CD4-positive, alpha-beta memory T cell (primary cell): ENCODE measurements at regions of chr17 and their contacts with region 1.

Region 1: DNA sequence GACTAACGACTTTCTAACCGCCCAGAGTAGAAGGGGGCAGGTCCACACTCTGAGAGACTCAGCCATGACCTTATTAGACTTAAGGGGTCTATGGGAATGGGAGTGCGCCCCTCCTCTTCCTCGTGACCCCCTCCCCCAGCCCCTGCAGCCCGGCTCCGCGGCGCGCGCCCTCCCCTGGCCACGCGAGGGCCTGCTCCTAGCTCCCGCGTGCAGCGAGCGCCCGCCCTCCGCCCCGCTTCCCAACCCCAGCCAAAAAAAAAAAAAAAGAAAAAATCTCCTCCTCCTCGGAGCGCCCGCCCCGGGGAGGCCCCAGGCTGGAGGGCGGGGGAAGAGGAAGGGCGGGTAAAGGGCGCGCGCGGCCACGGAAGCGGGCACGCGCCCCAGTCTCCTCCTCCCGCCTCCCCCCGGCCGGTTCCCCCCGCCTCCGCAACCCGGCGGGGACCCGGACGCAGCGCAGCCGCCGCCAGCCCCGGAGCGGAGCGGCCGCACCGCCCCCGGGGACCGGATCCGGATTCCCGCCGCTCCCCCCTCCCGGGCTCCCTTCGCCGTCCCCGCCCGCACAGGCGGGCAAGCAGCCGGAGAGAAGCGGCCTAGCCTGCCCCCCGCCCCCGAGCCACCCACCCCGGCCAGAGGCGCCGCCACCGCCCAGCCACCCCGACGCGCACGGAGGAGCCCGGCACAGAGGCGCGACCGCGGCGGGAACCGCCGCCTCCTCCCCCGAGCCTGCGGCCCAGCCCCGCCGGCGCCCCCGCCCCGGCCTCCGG is 949 bp downstream of the UBTF start:
- DNase-seq: peak; percentile 85 to 92 (median 90)
- H3K4me3 ChIP-seq: peak overlapping the region; percentile 37 to 50
- H3K4me3 Mint-ChIP-seq: peak overlapping the region; percentile 68 to 93 (median 83)
- H3K27ac ChIP-seq: peak overlapping the region; percentile 71
- H3K27ac Mint-ChIP-seq: peak overlapping the region; percentile 15 to 95 (median 91)
- H3K4me1 ChIP-seq: peaks cover 60% of the 10 kb centered on the region
- H3K4me1 Mint-ChIP-seq: peaks cover 39 to 68% (median 51%) of the 10 kb centered on the region in 4 donors
- H3K27me3 ChIP-seq: no peaks in the 10 kb centered on the region
- H3K27me3 Mint-ChIP-seq: no peaks in the 10 kb centered on the region

Region 2: DNA sequence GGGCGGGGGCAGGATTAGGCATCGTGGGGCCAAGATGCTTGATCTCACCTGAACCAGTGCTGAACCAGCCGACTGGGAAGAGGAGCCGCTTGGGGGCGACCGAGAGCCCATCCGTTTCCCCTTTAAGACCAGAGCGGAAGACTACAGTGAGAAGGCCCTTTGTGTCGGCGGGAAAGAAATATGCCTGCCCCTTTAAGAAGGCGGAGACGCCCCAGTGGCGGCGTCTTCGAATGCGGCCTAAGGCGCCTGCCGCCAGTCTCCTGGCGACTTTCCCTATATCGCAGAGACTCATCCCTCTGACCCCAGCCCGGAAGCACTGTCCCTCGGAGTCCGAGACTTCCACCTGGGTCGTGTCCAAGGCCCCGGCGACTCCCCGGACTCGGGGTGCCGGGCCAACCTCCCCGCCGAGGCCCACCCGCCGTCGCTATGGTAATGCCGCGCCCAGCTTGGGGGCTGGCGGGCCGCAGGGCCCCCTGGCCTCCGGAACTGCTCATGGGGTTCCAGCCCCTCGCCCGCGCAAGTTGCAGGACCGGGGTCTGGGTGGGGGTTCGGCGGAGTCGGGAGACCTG is 76.7 kb before region 1 on chr17 and contains the start of gene HROB:
- CTCF ChIA-PET with region 1: no interaction called
- POLR2A ChIA-PET with region 1: no interaction called
- intact Hi-C with region 1: loop called (anchors 2 kb)
- DNase-seq: peak; percentile 96 to 99 (median 97)
- H3K4me3 ChIP-seq: peak within 1 kb of the TSS; percentile 66 to 69
- H3K4me3 Mint-ChIP-seq: peak within 1 kb of the TSS; percentile 77 to 94 (median 84)
- H3K27ac ChIP-seq: peak within 1 kb of the TSS; percentile 79
- H3K27ac Mint-ChIP-seq: peak within 1 kb of the TSS; percentile 88 to 95 (median 90)
- H3K4me1 ChIP-seq: peaks cover 14% of the 10 kb centered on the region
- H3K4me1 Mint-ChIP-seq: peaks cover 2 to 19% (median 10%) of the 10 kb centered on the region in 4 donors
- H3K27me3 ChIP-seq: no peaks in the 10 kb centered on the region
- H3K27me3 Mint-ChIP-seq: peaks cover 7% of the 10 kb centered on the region in 2 donors
- total RNA-seq, gene HROB: 0.36 to 0.64 TPM

Region 3: GRCh38 chr17:44199553-44200477 is 18.7 kb before region 1 on chr17 and contains the start of gene ATXN7L3:
- CTCF ChIA-PET with region 1: interaction called, 21 read pairs
- POLR2A ChIA-PET with region 1: interaction called, 325 read pairs
- intact Hi-C with region 1: loop called (anchors 1 kb)
- DNase-seq: peak; percentile 96 to 99 (median 98)
- H3K4me3 ChIP-seq: peak within 1 kb of the TSS; percentile 82 to 88
- H3K4me3 Mint-ChIP-seq: peak within 1 kb of the TSS; percentile 90 to 94 (median 92)
- H3K27ac ChIP-seq: peak within 1 kb of the TSS; percentile 82
- H3K27ac Mint-ChIP-seq: peak within 1 kb of the TSS; percentile 89 to 98 (median 96)
- H3K4me1 ChIP-seq: peaks cover 43% of the 10 kb centered on the region
- H3K4me1 Mint-ChIP-seq: peaks cover 30 to 58% (median 40%) of the 10 kb centered on the region in 4 donors
- H3K27me3 ChIP-seq: no peaks in the 10 kb centered on the region
- H3K27me3 Mint-ChIP-seq: no peaks in the 10 kb centered on the region
- total RNA-seq, gene ATXN7L3: 123 to 128 TPM

Region 4: DNA sequence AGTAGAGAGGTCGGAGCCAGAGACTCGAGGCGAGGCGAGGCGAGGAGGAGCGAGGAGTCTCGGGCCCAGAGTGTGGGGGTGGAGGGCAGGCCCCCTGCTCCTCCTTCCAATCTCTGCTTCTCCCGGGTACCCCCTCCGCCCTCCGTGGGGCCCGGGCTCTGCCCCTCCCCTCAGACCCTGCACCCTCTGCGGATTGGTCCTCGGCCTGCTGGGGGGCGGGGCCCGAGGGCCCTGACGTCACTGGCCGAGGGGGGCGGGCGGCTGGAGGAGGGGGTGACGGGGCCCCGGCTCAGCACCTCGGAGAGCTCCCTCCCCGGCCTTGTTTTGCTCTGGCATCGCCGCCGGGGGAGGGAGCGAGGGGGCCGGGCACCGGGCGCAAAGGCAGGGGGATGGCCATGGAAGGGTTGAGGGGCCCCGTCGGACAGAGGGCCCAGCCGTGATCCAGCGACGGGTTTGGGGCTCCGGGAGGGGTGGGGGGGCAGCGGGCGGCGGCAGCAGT is 89.8 kb after region 1 on chr17 and contains the start of gene RUNDC3A:
- CTCF ChIA-PET with region 1: no interaction called
- POLR2A ChIA-PET with region 1: interaction called, 13 read pairs
- intact Hi-C with region 1: loop called (anchors 1 kb)
- DNase-seq: peak; percentile 81 to 85 (median 82)
- H3K4me3 ChIP-seq: no peak within 1 kb of the TSS
- H3K4me3 Mint-ChIP-seq: peak within 1 kb of the TSS; percentile 19 to 80 (median 58)
- H3K27ac ChIP-seq: no peak within 1 kb of the TSS
- H3K27ac Mint-ChIP-seq: peak within 1 kb of the TSS in 2 of 7 donors; percentile 43 to 50
- H3K4me1 ChIP-seq: peaks cover 16% of the 10 kb centered on the region
- H3K4me1 Mint-ChIP-seq: peaks cover 0 to 26% (median 19%) of the 10 kb centered on the region in 4 donors
- H3K27me3 ChIP-seq: peaks cover 3% of the 10 kb centered on the region
- H3K27me3 Mint-ChIP-seq: peaks cover 10 to 32% of the 10 kb centered on the region in 2 donors
- total RNA-seq, gene RUNDC3A: 0.19 TPM in 1 of 2 experiments, not detected in the other

Region 5: DNA sequence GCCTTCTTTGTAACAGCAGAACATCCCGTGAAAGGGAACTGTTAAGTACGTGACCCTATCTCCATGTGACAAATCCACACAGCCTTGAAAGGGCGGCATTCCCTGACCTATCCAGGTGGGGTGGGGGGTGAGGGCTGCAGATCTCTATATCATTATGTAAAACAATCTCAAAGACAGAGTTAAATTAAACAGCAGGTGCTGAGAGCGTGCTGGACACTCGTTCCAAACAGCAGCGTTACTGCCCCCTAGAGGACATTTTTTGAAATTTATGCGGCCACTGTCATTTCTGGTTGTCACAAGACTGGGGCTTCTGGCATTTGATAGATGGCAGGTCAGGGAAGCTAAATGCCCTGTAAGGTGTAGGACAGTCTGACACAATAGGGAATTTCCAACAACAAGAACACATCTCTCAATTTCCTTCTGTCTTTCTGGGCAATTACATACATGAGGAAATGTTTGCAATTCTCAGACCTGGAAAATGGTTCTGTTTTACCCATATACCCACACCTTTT is 112.8 kb after region 1 on chr17:
- CTCF ChIA-PET with region 1: interaction called, 107 read pairs
- POLR2A ChIA-PET with region 1: interaction called, 209 read pairs
- intact Hi-C with region 1: loop called (anchors 1 kb)
- DNase-seq: peak; percentile 69 to 79 (median 74)
- H3K4me3 ChIP-seq: no peak overlapping the region
- H3K4me3 Mint-ChIP-seq: peak overlapping the region in 1 of 8 donors; percentile 39
- H3K27ac ChIP-seq: no peak overlapping the region
- H3K27ac Mint-ChIP-seq: peak overlapping the region in 3 of 7 donors; percentile 25 to 77 (median 70)
- H3K4me1 ChIP-seq: peaks cover 4% of the 10 kb centered on the region
- H3K4me1 Mint-ChIP-seq: peaks cover 10 to 23% (median 14%) of the 10 kb centered on the region in 4 donors
- H3K27me3 ChIP-seq: no peaks in the 10 kb centered on the region
- H3K27me3 Mint-ChIP-seq: no peaks in the 10 kb centered on the region